Ascending aorta (tissue), 2 donors: ENCODE measurements at regions of chr14 and their contacts with region 1.

Region 1: DNA sequence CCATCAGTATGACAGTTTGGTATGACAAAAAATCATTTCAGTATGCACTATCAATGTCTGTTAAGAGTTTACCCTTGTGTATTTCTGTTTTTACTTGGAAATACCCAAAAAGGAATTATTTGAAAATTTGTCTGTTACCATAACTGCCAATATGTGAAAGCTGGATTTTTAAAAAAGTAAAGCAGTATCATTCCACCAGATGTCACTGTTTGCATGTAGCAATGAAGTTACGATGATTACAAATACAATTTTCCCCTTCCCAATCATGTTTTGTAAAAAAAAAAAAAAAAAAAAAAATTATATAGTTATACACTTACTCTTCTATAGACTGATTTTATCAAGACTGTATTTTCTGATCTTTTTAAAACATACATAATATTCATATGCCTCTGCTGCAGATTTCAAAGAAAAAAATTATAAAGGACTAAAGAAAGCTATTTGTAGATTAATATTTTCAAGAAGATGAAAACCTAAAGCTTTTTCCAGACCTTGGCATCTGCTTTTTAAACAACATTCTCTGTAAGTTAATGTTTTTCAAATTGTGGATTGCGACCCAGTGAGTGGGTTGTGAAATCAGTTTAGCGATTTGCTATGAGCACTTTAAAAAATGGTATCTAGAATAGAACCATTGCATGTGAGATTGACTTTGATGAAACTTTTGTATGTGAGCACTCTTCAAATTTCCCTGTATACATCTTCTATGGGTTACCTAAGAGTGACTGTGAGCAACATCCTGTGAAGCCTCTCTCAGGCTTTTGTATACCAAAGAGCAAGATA is 114.2 kb downstream of the TTC6 start:
- DNase-seq: no peak
- H3K4me3 ChIP-seq: no peak overlapping the region
- H3K27ac ChIP-seq: no peak overlapping the region
- H3K4me1 ChIP-seq: no peaks in the 10 kb centered on the region
- H3K27me3 ChIP-seq: no peaks in the 10 kb centered on the region
- CTCF ChIP-seq: peak in 1 of 3 experiments; percentile 21

Region 2: GRCh38 chr14:37874429-37875191 is 165.0 kb after region 1 on chr14:
- intact Hi-C with region 1: loop called (anchors 1 kb)
- DNase-seq: peak in 1 of 2 donors; percentile 82
- H3K4me3 ChIP-seq: no peak overlapping the region
- H3K27ac ChIP-seq: no peak overlapping the region
- H3K4me1 ChIP-seq: no peaks in the 10 kb centered on the region
- H3K27me3 ChIP-seq: no peaks in the 10 kb centered on the region
- CTCF ChIP-seq: peak; percentile 53 to 77 (median 74)

Region 3: DNA sequence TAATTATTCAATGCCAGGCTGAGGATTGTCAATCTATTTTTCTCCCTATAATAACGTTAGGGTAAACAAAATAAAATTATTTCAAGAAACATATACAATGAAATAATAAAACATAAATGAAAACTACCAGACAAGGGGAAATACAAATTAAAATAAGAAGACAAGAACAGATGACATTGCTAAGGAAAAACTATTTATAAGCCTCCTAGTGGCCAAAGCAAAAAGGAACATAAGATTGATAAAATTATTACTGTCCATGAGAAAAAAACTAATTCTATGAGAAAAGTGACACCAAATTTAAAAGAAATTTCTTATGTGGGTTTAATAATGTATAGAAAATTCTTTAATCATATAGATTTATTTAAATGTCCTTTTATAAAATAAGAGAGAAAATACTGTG is 180.5 kb after region 1 on chr14:
- intact Hi-C with region 1: no loop called
- DNase-seq: no peak
- H3K4me3 ChIP-seq: no peak overlapping the region
- H3K27ac ChIP-seq: no peak overlapping the region
- H3K4me1 ChIP-seq: no peaks in the 10 kb centered on the region
- H3K27me3 ChIP-seq: no peaks in the 10 kb centered on the region
- CTCF ChIP-seq: no peak